ENCODE measurements at regions of chr5 and their contacts with region 1.

Region 1: GRCh38 chr5:41057231-41057630 is 13.9 kb downstream of the MROH2B start:
- DNase-seq: peak in 1 of 2 experiments; percentile 32
- H3K4me3 ChIP-seq: no peak overlapping the region
- H3K27ac ChIP-seq: no peak overlapping the region
- H3K4me1 ChIP-seq: no peaks in the 10 kb centered on the region
- H3K27me3 ChIP-seq: no peaks in the 10 kb centered on the region
- CTCF ChIP-seq: no peak

Region 2: GRCh38 chr5:40958811-40959210 is 98.4 kb before region 1 on chr5:
- CTCF ChIA-PET with region 1: interaction called, 12 read pairs
- POLR2A ChIA-PET with region 1: no interaction called
- intact Hi-C with region 1: no loop called
- DNase-seq: no peak
- H3K4me3 ChIP-seq: no peak overlapping the region
- H3K27ac ChIP-seq: no peak overlapping the region
- H3K4me1 ChIP-seq: peaks cover 5% of the 10 kb centered on the region; the same call in 1 of the 2 replicates
- H3K27me3 ChIP-seq: no peaks in the 10 kb centered on the region
- CTCF ChIP-seq: no peak

Region 3: GRCh38 chr5:41252036-41252435 is 194.8 kb after region 1 on chr5:
- CTCF ChIA-PET with region 1: no interaction called
- POLR2A ChIA-PET with region 1: no interaction called
- intact Hi-C with region 1: no loop called
- DNase-seq: no peak
- H3K4me3 ChIP-seq: no peak overlapping the region
- H3K27ac ChIP-seq: no peak overlapping the region
- H3K4me1 ChIP-seq: peaks cover 7% of the 10 kb centered on the region
- H3K27me3 ChIP-seq: no peaks in the 10 kb centered on the region
- CTCF ChIP-seq: no peak

Measured in PC-9 (cell line).